ENCODE measurements at regions of chr10 and their contacts with region 1.

Region 1: DNA sequence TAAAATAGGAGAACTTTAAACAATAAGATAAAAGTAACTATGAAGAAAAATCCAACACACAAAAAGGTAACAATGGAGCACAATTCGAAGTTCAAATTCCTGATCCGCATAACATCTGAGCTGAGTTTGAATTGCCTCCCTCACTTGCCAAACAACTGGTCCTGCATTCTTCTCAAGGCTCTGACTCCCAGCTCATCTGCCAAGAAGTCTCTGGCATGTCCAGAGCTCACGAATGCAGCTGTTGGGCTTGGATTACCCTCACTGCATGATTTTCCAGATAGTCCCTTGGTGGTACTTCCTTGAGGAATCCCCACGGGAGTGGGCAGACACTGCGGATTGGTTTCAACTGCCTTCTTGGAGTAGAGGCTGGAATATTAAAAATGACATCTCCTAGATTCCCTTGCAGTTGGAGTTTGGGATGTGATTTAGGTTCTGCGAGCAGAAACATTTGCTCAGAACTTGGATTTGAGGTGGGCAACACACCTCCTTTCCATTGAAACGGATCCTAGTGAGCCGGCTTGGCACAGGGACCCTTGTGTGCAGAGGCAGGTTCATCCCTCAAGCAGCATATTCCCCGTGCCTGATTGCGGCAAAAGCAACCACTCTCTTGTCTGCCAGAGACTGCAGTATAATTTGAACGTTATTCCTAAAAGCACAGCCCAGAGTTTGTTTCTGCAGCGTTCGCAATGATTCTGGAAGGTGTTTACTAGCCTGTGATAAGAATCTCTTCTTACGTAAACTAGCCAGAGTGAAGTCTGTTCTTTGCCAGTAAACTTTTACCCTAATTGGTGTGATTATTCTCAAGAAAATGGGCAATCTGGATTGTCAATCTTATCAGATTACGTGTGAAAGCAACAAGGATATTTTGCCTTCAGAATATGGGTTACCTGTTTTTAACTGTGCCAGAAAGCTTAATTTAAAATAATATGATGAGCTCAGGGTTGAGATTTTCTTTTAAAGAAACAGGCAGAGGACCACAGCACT is 23.4 kb upstream of the PRKCQ start:
- DNase-seq: no peak
- ATAC-seq: no peak
- H3K4me3 ChIP-seq: no peak overlapping the region
- H3K4me3 Mint-ChIP-seq: no peak overlapping the region
- H3K27ac ChIP-seq: no peak overlapping the region
- H3K27ac Mint-ChIP-seq: peak overlapping the region; percentile 18 to 44
- H3K4me1 ChIP-seq: peaks cover 43 to 46% of the 10 kb centered on the region in 2 experiments
- H3K4me1 Mint-ChIP-seq: peaks cover 50 to 85% (median 61%) of the 10 kb centered on the region in 3 donors
- H3K27me3 ChIP-seq: no peaks in the 10 kb centered on the region
- H3K27me3 Mint-ChIP-seq: no peaks in the 10 kb centered on the region

Region 2: GRCh38 chr10:5818894-5819293 is 784.5 kb before region 1 on chr10:
- CTCF ChIA-PET with region 1: interaction called in 1 of 2 experiments, 10 read pairs
- POLR2A ChIA-PET with region 1: no interaction called
- DNase-seq: no peak
- ATAC-seq: no peak
- H3K4me3 ChIP-seq: no peak overlapping the region
- H3K4me3 Mint-ChIP-seq: no peak overlapping the region
- H3K27ac ChIP-seq: no peak overlapping the region
- H3K27ac Mint-ChIP-seq: no peak overlapping the region
- H3K4me1 ChIP-seq: peaks cover 11 to 16% of the 10 kb centered on the region in 2 experiments
- H3K4me1 Mint-ChIP-seq: peaks cover 21 to 34% (median 27%) of the 10 kb centered on the region in 3 donors
- H3K27me3 ChIP-seq: no peaks in the 10 kb centered on the region
- H3K27me3 Mint-ChIP-seq: no peaks in the 10 kb centered on the region

Region 3: DNA sequence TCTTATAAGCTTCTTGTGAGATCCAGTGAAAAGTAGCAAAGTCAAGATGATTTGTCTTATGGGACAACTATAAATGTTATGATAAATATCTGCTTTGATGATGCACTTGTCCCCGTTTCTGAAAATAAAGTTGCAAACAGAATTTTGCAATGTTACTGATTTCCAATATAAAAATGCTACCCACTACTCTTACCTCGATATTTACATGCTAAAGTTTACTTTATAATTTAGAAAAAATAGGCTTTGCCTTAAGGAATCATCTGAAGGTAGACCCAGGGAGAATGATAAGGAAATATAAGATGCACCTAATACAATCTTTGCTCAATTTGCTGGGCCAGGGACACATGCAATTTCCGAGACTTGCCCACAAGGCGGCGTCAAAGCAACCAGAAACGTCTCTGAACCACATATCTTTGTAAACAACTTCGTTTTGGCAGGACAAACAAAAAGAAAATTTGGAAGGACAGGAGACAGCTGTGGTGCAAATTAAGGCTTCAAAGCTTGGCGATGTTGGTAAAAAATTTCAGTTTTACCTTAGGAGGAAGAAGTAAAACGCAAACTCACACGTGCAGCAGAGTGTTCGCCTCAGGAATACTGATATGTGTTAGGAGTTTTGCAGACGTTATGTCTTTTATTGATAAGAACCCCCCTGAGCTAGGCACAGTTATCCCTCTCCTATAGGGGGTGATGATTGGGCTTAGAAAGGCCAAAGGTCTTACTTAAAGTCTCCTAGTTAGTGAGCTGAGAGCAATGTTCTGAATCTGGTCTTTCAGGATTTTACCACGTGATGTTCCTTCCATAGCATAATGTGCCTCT is 157.7 kb before region 1 on chr10:
- CTCF ChIA-PET with region 1: interaction called in 1 of 2 experiments, 18 read pairs
- POLR2A ChIA-PET with region 1: no interaction called
- DNase-seq: peak; percentile 21 to 77 (median 55)
- ATAC-seq: peak; percentile 61 to 70 (median 67)
- H3K4me3 ChIP-seq: no peak overlapping the region
- H3K4me3 Mint-ChIP-seq: no peak overlapping the region
- H3K27ac ChIP-seq: peak overlapping the region; percentile 47
- H3K27ac Mint-ChIP-seq: peak overlapping the region; percentile 50 to 74
- H3K4me1 ChIP-seq: peaks cover 3 to 10% of the 10 kb centered on the region in 2 experiments
- H3K4me1 Mint-ChIP-seq: peaks cover 22 to 34% (median 25%) of the 10 kb centered on the region in 3 donors
- H3K27me3 ChIP-seq: no peaks in the 10 kb centered on the region
- H3K27me3 Mint-ChIP-seq: no peaks in the 10 kb centered on the region

Region 4: GRCh38 chr10:6473901-6474370 is 129.5 kb before region 1 on chr10:
- CTCF ChIA-PET with region 1: interaction called in 1 of 2 experiments, 13 read pairs
- POLR2A ChIA-PET with region 1: no interaction called
- DNase-seq: peak in 14 of 35 experiments; percentile 14 to 78 (median 27)
- ATAC-seq: peak; percentile 73 to 82 (median 78)
- H3K4me3 ChIP-seq: peak overlapping the region; percentile 38 to 61
- H3K4me3 Mint-ChIP-seq: peak overlapping the region; percentile 75 to 90 (median 78)
- H3K27ac ChIP-seq: peak overlapping the region; percentile 93
- H3K27ac Mint-ChIP-seq: peak overlapping the region; percentile 96
- H3K4me1 ChIP-seq: peaks cover 22 to 35% of the 10 kb centered on the region in 2 experiments
- H3K4me1 Mint-ChIP-seq: peaks cover 60 to 75% (median 65%) of the 10 kb centered on the region in 3 donors
- H3K27me3 ChIP-seq: no peaks in the 10 kb centered on the region
- H3K27me3 Mint-ChIP-seq: no peaks in the 10 kb centered on the region

Region 5: GRCh38 chr10:6593241-6593671 is 10.2 kb before region 1 on chr10:
- CTCF ChIA-PET with region 1: interaction called in 1 of 2 experiments, 11 read pairs
- POLR2A ChIA-PET with region 1: interaction called in 1 of 2 experiments, 4 read pairs
- DNase-seq: peak in 4 of 35 experiments; percentile 19 to 60 (median 45)
- ATAC-seq: peak; percentile 30 to 73 (median 62)
- H3K4me3 ChIP-seq: no peak overlapping the region
- H3K4me3 Mint-ChIP-seq: peak overlapping the region; percentile 64 to 91 (median 68)
- H3K27ac ChIP-seq: peak overlapping the region; percentile 85
- H3K27ac Mint-ChIP-seq: peak overlapping the region; percentile 97 to 98
- H3K4me1 ChIP-seq: peaks cover 54 to 95% of the 10 kb centered on the region in 2 experiments
- H3K4me1 Mint-ChIP-seq: peaks cover 95% of the 10 kb centered on the region in 3 donors
- H3K27me3 ChIP-seq: no peaks in the 10 kb centered on the region
- H3K27me3 Mint-ChIP-seq: no peaks in the 10 kb centered on the region

Region 6: DNA sequence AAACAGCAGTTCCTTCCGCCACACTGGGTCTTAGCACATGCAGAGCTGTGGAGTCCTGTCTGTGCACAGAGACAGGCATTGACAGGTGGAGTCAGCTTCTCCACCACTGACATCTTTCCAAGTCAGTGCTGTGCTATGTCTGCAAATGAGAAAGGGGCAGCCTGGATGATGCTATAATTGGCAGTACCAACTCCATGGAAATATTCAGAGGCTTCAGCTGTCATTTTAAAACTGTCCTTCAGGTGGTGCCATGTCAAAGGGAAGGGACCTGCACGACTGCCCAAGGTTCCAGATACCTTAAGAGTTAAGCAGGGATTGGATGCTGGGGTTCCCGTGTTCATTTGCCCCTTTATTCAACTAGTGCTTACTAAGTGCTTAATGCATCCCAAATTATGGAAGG is 234.7 kb after region 1 on chr10:
- CTCF ChIA-PET with region 1: no interaction called
- POLR2A ChIA-PET with region 1: no interaction called
- DNase-seq: peak in 1 of 35 experiments; percentile 19
- ATAC-seq: peak in 1 of 4 experiments; percentile 22
- H3K4me3 ChIP-seq: no peak overlapping the region
- H3K4me3 Mint-ChIP-seq: no peak overlapping the region
- H3K27ac ChIP-seq: no peak overlapping the region
- H3K27ac Mint-ChIP-seq: no peak overlapping the region
- H3K4me1 ChIP-seq: no peaks in the 10 kb centered on the region
- H3K4me1 Mint-ChIP-seq: no peaks in the 10 kb centered on the region
- H3K27me3 ChIP-seq: no peaks in the 10 kb centered on the region
- H3K27me3 Mint-ChIP-seq: peaks cover 2 to 13% of the 10 kb centered on the region in 2 donors